ENCODE measurements at regions of chr2 and their contacts with region 1.

Region 1: GRCh38 chr2:162123806-162124758 is 28.0 kb downstream of the GCG start:
- DNase-seq: peak in 4 of 5 donors; percentile 58 to 64 (median 60)
- H3K4me3 ChIP-seq: no peak overlapping the region
- H3K4me3 Mint-ChIP-seq: no peak overlapping the region
- H3K27ac ChIP-seq: no peak overlapping the region
- H3K27ac Mint-ChIP-seq: peak overlapping the region in 2 of 7 donors; percentile 18 to 64
- H3K4me1 ChIP-seq: peaks cover 6% of the 10 kb centered on the region
- H3K4me1 Mint-ChIP-seq: peaks cover 11 to 16% (median 12%) of the 10 kb centered on the region in 4 donors
- H3K27me3 ChIP-seq: no peaks in the 10 kb centered on the region
- H3K27me3 Mint-ChIP-seq: no peaks in the 10 kb centered on the region

Region 2: DNA sequence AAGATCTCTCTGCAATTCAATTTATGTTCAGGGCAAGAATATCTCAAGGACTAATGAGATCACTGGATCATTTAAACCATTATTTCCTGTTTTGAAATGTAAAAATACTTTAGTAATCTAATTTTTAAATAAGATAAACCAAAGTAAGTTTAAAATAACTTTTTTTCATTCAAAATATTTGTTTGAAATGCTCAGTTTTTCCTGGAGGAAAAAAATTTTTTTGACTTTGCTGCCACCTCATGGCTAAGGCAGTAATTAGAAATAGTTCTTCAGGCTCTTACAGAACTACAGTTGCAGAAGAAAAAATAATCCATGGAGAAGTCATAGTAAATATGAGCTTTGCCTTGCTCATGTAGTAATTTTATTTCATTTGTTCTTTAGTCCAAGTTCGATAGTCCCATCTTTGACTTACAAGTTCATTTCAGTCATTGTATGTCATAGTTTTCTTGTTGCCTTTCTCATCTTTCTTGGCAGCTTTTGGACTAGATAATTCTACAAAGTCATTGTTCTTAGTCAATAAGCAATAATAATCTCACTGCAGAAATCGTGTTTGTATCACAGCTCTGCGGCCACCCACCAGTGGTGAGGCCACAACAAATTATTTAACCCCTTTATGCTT is 177.5 kb before region 1 on chr2:
- CTCF ChIA-PET with region 1: interaction called, 25 read pairs
- POLR2A ChIA-PET with region 1: no interaction called
- intact Hi-C with region 1: no loop called
- DNase-seq: peak in 4 of 5 donors; percentile 15 to 31 (median 22)
- H3K4me3 ChIP-seq: no peak overlapping the region
- H3K4me3 Mint-ChIP-seq: no peak overlapping the region
- H3K27ac ChIP-seq: no peak overlapping the region
- H3K27ac Mint-ChIP-seq: no peak overlapping the region
- H3K4me1 ChIP-seq: peaks cover 12% of the 10 kb centered on the region
- H3K4me1 Mint-ChIP-seq: peaks cover 4 to 5% (median 5%) of the 10 kb centered on the region in 4 donors
- H3K27me3 ChIP-seq: peaks cover 3% of the 10 kb centered on the region
- H3K27me3 Mint-ChIP-seq: no peaks in the 10 kb centered on the region

Region 3: GRCh38 chr2:161992526-161992925 is 131.6 kb before region 1 on chr2:
- CTCF ChIA-PET with region 1: interaction called, 40 read pairs
- POLR2A ChIA-PET with region 1: no interaction called
- intact Hi-C with region 1: loop called (anchors 5 kb)
- DNase-seq: peak; percentile 46 to 62 (median 57)
- H3K4me3 ChIP-seq: peak overlapping the region; percentile 20 to 36
- H3K4me3 Mint-ChIP-seq: peak overlapping the region; percentile 70 to 94 (median 84)
- H3K27ac ChIP-seq: peak overlapping the region; percentile 65
- H3K27ac Mint-ChIP-seq: peak overlapping the region; percentile 95 to 99 (median 98)
- H3K4me1 ChIP-seq: peaks cover 56% of the 10 kb centered on the region
- H3K4me1 Mint-ChIP-seq: peaks cover 41 to 72% (median 50%) of the 10 kb centered on the region in 4 donors
- H3K27me3 ChIP-seq: no peaks in the 10 kb centered on the region
- H3K27me3 Mint-ChIP-seq: no peaks in the 10 kb centered on the region

Region 4: DNA sequence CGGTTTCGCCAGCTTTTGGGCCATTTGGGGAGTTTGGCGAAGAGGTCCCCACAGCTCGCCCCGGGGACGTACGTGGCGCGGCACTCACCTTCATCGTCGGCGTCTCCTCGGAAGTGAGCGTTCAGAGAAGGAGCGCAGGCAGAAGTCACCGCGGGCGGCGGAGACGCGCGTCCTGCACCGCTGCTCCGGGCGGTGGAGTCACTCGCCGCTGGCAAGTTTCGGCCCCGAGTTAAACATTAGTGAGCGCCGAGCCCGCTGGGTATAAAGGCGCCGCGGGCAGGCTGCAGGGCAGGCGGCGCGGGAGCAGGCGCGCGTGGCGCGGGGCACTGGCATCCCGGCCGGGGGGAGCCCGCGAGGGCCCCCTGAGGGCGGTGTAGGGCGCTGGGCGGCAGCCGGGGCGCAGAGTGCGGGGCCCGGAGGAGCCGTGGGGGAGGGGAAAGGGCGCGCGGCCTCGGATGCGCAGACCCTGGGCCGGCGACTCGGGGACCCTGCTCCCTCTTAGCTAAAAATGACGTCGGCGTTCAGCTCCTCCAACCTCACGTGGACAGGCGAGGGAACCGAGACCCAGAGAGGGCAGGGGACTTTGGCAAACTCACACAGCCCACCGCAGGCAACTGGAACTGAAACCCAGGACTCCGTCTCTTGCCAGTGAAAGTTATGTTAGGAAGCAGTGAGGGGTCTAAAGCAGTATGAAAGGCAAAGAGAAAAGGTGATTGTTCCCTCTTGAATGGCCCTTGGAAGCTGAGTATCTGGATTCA is 50.0 kb before region 1 on chr2 and contains the start of gene DPP4:
- CTCF ChIA-PET with region 1: interaction called, 13 read pairs
- POLR2A ChIA-PET with region 1: no interaction called
- intact Hi-C with region 1: loop called (anchors 5 kb)
- DNase-seq: peak; percentile 52 to 64 (median 58)
- H3K4me3 ChIP-seq: peak within 1 kb of the TSS; percentile 68 to 76
- H3K4me3 Mint-ChIP-seq: peak within 1 kb of the TSS; percentile 95 to 100 (median 98)
- H3K27ac ChIP-seq: peak within 1 kb of the TSS; percentile 78
- H3K27ac Mint-ChIP-seq: peak within 1 kb of the TSS; percentile 86 to 98 (median 94)
- H3K4me1 ChIP-seq: peaks cover 45% of the 10 kb centered on the region
- H3K4me1 Mint-ChIP-seq: peaks cover 39 to 62% (median 48%) of the 10 kb centered on the region in 4 donors
- H3K27me3 ChIP-seq: no peaks in the 10 kb centered on the region
- H3K27me3 Mint-ChIP-seq: no peaks in the 10 kb centered on the region
- total RNA-seq, gene DPP4: 38.5 to 40.2 TPM

Region 5: DNA sequence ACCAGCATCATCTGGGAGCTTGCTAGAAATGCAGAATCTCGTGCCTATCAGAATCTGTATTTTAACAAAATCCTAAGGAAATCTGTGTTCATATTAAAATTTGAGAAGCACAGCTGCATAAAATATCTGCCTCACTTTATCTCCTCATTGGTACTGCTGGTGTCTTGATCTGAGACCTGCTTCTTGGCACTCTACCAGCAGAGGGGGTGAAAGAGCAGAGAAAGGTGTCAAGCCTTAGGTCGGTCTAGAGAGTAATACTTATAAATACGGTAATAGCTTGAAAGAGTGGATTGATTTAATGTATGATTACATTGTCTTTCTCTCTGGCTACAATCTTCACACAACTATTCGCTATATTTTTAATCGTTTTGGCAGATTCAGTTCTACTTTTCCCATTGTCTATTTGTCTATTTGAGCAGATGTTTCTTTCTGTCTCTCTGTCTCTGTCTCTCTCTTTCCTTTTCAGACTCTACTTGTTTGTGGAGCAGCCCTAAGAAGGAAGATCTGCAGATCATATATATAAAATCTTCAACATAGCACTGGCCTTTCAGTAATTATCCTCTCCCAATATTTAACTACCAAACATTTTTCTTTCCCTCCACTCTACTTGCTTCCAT is 29.6 kb after region 1 on chr2:
- CTCF ChIA-PET with region 1: interaction called, 13 read pairs
- POLR2A ChIA-PET with region 1: interaction called, 3 read pairs
- intact Hi-C with region 1: no loop called
- DNase-seq: peak in 4 of 5 donors; percentile 55 to 58 (median 57)
- H3K4me3 ChIP-seq: no peak overlapping the region
- H3K4me3 Mint-ChIP-seq: peak overlapping the region in 5 of 8 donors; percentile 7 to 72 (median 35)
- H3K27ac ChIP-seq: no peak overlapping the region
- H3K27ac Mint-ChIP-seq: no peak overlapping the region
- H3K4me1 ChIP-seq: peaks cover 6% of the 10 kb centered on the region
- H3K4me1 Mint-ChIP-seq: peaks cover 0 to 5% (median 3%) of the 10 kb centered on the region in 4 donors
- H3K27me3 ChIP-seq: no peaks in the 10 kb centered on the region
- H3K27me3 Mint-ChIP-seq: peaks cover 14 to 16% of the 10 kb centered on the region in 2 donors

Measured in CD4-positive, alpha-beta memory T cell (primary cell).